Aorta (tissue), 5 donors: ENCODE measurements at regions of chr14 and their contacts with region 1.

Region 1: GRCh38 chr14:100383727-100384158 is 60.6 kb downstream of the SLC25A47 start:
- DNase-seq: peak in 1 of 2 donors; percentile 70
- ATAC-seq: peak; percentile 80
- H3K4me3 ChIP-seq: no peak overlapping the region
- H3K27ac ChIP-seq: no peak overlapping the region
- H3K4me1 ChIP-seq: no peaks in the 10 kb centered on the region
- H3K27me3 ChIP-seq: no peaks in the 10 kb centered on the region

Region 2: GRCh38 chr14:100654814-100655740 is 271.3 kb after region 1 on chr14:
- intact Hi-C with region 1: loop called in 1 of 2 experiments (anchors 5 kb)
- DNase-seq: no peak
- ATAC-seq: peak; percentile 46
- H3K4me3 ChIP-seq: no peak overlapping the region
- H3K27ac ChIP-seq: no peak overlapping the region
- H3K4me1 ChIP-seq: no peaks in the 10 kb centered on the region
- H3K27me3 ChIP-seq: no peaks in the 10 kb centered on the region

Region 3: DNA sequence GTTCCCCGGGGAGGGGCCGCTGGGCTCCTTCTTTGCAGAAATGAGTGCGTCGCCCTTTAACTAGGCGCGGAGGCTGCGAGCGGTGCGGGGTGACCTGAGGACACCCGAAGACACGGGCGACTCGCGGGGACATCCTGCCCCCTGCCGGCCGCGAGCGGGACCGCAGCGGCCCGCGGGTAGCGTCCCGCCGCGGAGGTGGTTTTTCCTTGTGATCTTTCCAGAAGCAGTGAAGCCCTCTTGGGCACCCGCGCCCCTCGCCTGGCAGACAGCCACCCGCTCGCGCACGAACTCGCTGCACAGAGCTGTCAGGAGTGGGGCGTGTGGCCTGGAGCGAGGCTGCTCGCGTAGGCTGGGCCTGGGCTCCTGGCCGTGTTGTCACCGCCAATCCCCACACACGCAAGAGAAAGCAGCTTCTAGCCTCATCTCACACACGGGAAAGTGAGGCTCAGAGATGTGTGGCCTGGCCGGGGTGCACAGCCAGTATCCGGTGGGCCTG is 1244.8 kb after region 1 on chr14:
- intact Hi-C with region 1: loop called (anchors 2 to 5 kb)
- DNase-seq: peak; percentile 82 to 90
- ATAC-seq: peak; percentile 94
- H3K4me3 ChIP-seq: no peak overlapping the region
- H3K27ac ChIP-seq: no peak overlapping the region
- H3K4me1 ChIP-seq: no peaks in the 10 kb centered on the region
- H3K27me3 ChIP-seq: no peaks in the 10 kb centered on the region